ENCODE measurements at regions of chr10 and their contacts with region 1.

Region 1: GRCh38 chr10:60769406-60769805 is 8.9 kb upstream of the CDK1 start:
- DNase-seq: no peak
- H3K4me3 Mint-ChIP-seq: no peak overlapping the region
- H3K27ac Mint-ChIP-seq: no peak overlapping the region
- H3K4me1 Mint-ChIP-seq: peaks cover 20% of the 10 kb centered on the region
- H3K27me3 Mint-ChIP-seq: peaks cover 5% of the 10 kb centered on the region

Region 2: GRCh38 chr10:60444494-60445064 is 324.8 kb before region 1 on chr10:
- intact Hi-C with region 1: loop called (anchors 5 kb)
- DNase-seq: no peak
- H3K4me3 Mint-ChIP-seq: no peak overlapping the region
- H3K27ac Mint-ChIP-seq: no peak overlapping the region
- H3K4me1 Mint-ChIP-seq: peaks cover 8% of the 10 kb centered on the region
- H3K27me3 Mint-ChIP-seq: no peaks in the 10 kb centered on the region

Region 3: DNA sequence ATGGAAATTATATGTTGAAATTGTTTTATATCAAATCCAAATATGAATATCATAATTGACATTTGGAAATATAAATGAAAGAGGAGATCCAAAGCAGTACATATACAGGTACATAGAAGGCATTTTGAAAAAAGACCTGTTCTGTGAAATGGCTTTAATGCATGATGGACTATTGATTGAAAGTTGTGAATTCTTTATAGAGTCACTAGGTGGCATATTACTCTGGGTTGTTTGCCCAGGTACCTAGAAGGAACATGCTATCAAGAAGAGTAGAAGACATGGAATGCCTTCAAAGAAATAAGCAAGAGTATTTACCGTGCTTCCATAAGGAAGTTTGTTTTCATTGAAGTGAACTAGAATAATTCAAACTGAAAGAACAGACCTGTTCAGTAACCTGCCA is 219.7 kb before region 1 on chr10:
- intact Hi-C with region 1: loop called (anchors 5 kb)
- DNase-seq: no peak
- H3K4me3 Mint-ChIP-seq: no peak overlapping the region
- H3K27ac Mint-ChIP-seq: no peak overlapping the region
- H3K4me1 Mint-ChIP-seq: no peaks in the 10 kb centered on the region
- H3K27me3 Mint-ChIP-seq: no peaks in the 10 kb centered on the region

Measured in activated CD4-positive, alpha-beta T cell treated with anti-CD3 and anti-CD28 coated beads, Interleukin-2, amount 10 ng/mL, durations not matched to agents 24 days and 14 days (primary cell).